Activated CD8-positive, alpha-beta T cell treated with anti-CD3 and anti-CD28 coated beads for 36 hours (primary cell): ENCODE measurements at regions of chr19 and their contacts with region 1.

Region 1: GRCh38 chr19:49301165-49301865 is 23.7 kb downstream of the SLC6A16 start:
- DNase-seq: peak; percentile 93
- ATAC-seq: peak; percentile 99
- H3K4me3 Mint-ChIP-seq: no peak overlapping the region
- H3K27ac Mint-ChIP-seq: no peak overlapping the region
- H3K4me1 Mint-ChIP-seq: no peaks in the 10 kb centered on the region
- H3K27me3 Mint-ChIP-seq: no peaks in the 10 kb centered on the region
- CTCF ChIP-seq: peak; percentile 96

Region 2: GRCh38 chr19:49182848-49183344 is 118.4 kb before region 1 on chr19:
- CTCF ChIA-PET with region 1: no interaction called
- POLR2A ChIA-PET with region 1: no interaction called
- intact Hi-C with region 1: no loop called
- DNase-seq: no peak
- ATAC-seq: no peak
- H3K4me3 Mint-ChIP-seq: no peak overlapping the region
- H3K27ac Mint-ChIP-seq: no peak overlapping the region
- H3K4me1 Mint-ChIP-seq: no peaks in the 10 kb centered on the region
- H3K27me3 Mint-ChIP-seq: no peaks in the 10 kb centered on the region
- CTCF ChIP-seq: no peak

Region 3: DNA sequence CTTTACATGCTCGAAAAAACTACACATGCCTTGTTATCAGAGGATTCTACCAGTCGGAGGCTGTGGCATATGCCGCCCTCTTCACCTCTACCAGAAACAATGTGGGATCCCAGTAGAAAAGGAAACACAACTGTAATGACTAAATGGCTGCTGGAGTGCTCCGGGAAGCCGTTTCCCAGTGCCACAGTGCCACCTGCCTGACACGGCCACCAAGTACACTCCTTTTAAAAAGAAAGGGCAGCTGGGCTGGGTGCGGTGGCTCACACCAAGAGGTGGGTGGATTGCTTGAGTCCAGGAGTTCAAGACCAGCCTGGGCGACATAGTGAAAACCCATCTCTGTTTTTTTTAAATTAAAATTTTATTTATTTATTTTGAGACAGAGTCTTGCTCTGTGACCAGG is 76.5 kb before region 1 on chr19:
- CTCF ChIA-PET with region 1: interaction called, 41 read pairs
- POLR2A ChIA-PET with region 1: no interaction called
- intact Hi-C with region 1: no loop called
- DNase-seq: peak; percentile 65
- ATAC-seq: peak; percentile 67
- H3K4me3 Mint-ChIP-seq: no peak overlapping the region
- H3K27ac Mint-ChIP-seq: no peak overlapping the region
- H3K4me1 Mint-ChIP-seq: peaks cover 4% of the 10 kb centered on the region
- H3K27me3 Mint-ChIP-seq: peaks cover 10% of the 10 kb centered on the region
- CTCF ChIP-seq: peak; percentile 42

Region 4: GRCh38 chr19:49272184-49272583 is 29.1 kb before region 1 on chr19:
- CTCF ChIA-PET with region 1: interaction called, 20 read pairs
- POLR2A ChIA-PET with region 1: no interaction called
- intact Hi-C with region 1: no loop called
- DNase-seq: peak; percentile 9
- ATAC-seq: peak; percentile 72
- H3K4me3 Mint-ChIP-seq: no peak overlapping the region
- H3K27ac Mint-ChIP-seq: no peak overlapping the region
- H3K4me1 Mint-ChIP-seq: peaks cover 5% of the 10 kb centered on the region
- H3K27me3 Mint-ChIP-seq: peaks cover 5% of the 10 kb centered on the region
- CTCF ChIP-seq: no peak

Region 5: DNA sequence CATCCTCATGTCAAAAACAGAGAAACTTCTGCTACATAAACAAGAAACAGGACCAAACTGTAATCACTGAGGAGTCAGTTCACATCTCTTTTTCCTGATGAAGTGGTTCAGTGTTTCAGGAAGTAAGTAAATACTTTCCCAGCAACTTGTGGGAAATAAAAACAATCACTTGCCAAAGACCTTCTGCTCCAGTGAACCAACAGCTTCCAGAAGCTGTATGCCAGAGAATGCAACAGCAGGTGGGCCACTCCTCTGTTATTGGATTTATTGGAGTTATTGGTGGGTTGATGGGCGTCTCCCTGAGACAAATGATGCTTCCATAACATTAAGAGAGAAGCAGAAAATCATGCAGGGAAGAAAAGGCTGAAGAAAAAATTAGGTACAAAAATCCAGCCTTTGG is 13.8 kb after region 1 on chr19:
- CTCF ChIA-PET with region 1: interaction called, 23 read pairs
- POLR2A ChIA-PET with region 1: no interaction called
- intact Hi-C with region 1: no loop called
- DNase-seq: no peak
- ATAC-seq: no peak
- H3K4me3 Mint-ChIP-seq: no peak overlapping the region
- H3K27ac Mint-ChIP-seq: no peak overlapping the region
- H3K4me1 Mint-ChIP-seq: peaks cover 5% of the 10 kb centered on the region
- H3K27me3 Mint-ChIP-seq: no peaks in the 10 kb centered on the region
- CTCF ChIP-seq: no peak

Region 6: DNA sequence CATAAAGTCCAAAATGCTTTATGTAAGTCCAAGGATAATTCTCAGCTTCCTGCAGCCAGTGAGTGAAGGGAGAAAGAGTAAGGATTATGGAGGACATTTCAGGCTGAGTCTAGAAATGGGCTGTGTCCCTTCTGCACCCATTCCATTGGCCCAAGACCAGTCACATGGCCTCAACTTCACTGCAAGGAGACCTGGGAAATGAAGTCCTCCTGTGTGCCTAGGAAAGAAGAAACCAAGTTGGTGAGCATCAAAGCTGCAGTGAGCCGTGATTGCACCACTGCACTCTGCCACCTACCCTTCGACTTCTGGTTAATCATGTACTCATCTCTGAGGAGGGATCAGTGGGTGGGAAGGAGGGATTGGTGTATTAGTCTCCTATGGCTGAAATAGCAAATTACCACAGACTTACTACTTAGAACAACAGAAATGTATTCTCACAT is 30.3 kb after region 1 on chr19:
- CTCF ChIA-PET with region 1: interaction called, 29 read pairs
- POLR2A ChIA-PET with region 1: no interaction called
- intact Hi-C with region 1: no loop called
- DNase-seq: peak; percentile 80
- ATAC-seq: peak; percentile 75
- H3K4me3 Mint-ChIP-seq: no peak overlapping the region
- H3K27ac Mint-ChIP-seq: peak overlapping the region; percentile 81
- H3K4me1 Mint-ChIP-seq: peaks cover 57% of the 10 kb centered on the region
- H3K27me3 Mint-ChIP-seq: no peaks in the 10 kb centered on the region
- CTCF ChIP-seq: no peak

Region 7: DNA sequence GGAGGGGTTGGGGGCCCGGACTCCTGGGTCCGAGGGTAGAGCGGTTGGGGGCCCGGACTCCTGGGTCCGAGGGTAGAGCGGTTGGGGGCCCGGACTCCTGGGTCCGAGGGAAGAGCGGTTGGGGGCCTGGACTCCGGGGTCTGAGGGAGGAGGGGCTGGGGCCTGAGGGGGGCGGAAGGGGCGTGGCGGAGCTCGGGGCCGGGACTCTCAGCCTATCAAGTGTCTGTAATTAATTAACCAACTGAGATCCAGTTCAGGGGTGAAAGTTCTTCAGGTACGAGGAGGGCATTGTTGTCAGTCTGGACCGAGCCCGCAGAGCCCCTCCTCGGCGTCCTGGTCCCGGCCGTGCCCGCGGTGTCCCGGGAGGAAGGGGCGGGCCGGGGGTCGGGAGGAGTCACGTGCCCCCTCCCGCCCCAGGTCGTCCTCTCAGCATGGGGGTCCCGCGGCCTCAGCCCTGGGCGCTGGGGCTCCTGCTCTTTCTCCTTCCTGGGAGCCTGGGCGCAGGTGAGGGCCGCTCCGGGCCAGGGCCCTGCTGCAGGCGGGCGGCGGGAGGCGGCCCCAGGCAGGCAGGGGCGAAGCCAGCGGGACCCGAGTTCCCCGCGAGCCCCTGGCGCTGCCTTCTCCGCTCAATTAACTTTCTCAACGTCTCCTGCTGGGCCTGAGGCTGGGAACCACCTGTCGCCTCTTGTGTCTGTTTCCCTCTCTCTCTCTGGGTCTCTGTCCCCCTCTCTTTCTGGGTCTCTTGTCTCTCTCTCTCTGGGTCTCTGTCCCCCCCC is 211.8 kb after region 1 on chr19:
- CTCF ChIA-PET with region 1: no interaction called
- POLR2A ChIA-PET with region 1: no interaction called
- intact Hi-C with region 1: no loop called
- DNase-seq: peak; percentile 58
- ATAC-seq: peak; percentile 75
- H3K4me3 Mint-ChIP-seq: peak overlapping the region; percentile 76
- H3K27ac Mint-ChIP-seq: peak overlapping the region; percentile 79
- H3K4me1 Mint-ChIP-seq: peaks cover 19% of the 10 kb centered on the region
- H3K27me3 Mint-ChIP-seq: no peaks in the 10 kb centered on the region
- CTCF ChIP-seq: no peak